Activated CD4-positive, alpha-beta T cell treated with anti-CD3 and anti-CD28 coated beads for 36 hours (primary cell): ENCODE measurements at regions of chr2 and their contacts with region 1.

Region 1: GRCh38 chr2:233053928-233054784 is 6.0 kb upstream of the INPP5D start:
- DNase-seq: peak; percentile 86
- ATAC-seq: peak; percentile 82
- H3K4me3 Mint-ChIP-seq: no peak overlapping the region
- H3K27ac Mint-ChIP-seq: no peak overlapping the region
- H3K4me1 Mint-ChIP-seq: peaks cover 4% of the 10 kb centered on the region
- H3K27me3 Mint-ChIP-seq: no peaks in the 10 kb centered on the region

Region 2: DNA sequence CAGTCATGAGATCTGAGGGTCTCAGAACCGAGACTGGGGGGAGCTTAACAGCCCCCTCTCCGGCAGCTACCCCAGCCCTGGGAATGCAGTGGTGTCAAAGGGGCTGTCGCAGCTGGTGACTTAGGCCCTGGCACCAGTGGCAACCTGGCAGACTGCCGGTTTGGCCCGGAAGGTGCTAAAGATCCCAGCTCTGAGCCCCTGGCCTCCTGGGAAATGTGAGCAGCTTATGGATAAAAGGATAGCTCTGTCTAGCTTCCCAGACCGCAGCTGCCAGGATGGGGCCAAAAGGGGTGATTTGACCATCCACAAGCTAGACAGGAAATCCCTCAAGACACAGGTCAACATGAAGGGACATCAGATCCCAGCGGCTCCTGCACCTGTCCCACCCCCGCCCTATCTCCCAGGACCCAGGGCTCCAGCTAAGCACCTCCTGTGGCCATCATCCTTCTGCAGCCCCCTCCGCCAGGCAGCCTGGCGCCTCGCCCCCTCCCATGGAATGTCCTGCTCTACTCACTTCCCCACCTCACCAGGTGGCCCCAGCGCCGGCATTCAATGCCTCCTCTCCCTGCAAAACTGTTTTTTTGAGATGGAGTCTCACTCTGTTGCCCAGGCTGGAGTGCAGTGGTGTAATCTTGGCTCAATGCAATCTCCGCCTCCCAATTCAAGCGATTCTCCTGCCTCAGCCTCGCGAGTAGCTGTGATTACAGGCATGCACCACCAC is 453.9 kb before region 1 on chr2:
- CTCF ChIA-PET with region 1: interaction called, 3 read pairs
- POLR2A ChIA-PET with region 1: no interaction called
- intact Hi-C with region 1: loop called in 1 of 2 experiments (anchors 10 kb)
- DNase-seq: no peak
- ATAC-seq: no peak
- H3K4me3 Mint-ChIP-seq: no peak overlapping the region
- H3K27ac Mint-ChIP-seq: no peak overlapping the region
- H3K4me1 Mint-ChIP-seq: no peaks in the 10 kb centered on the region
- H3K27me3 Mint-ChIP-seq: no peaks in the 10 kb centered on the region

Region 3: DNA sequence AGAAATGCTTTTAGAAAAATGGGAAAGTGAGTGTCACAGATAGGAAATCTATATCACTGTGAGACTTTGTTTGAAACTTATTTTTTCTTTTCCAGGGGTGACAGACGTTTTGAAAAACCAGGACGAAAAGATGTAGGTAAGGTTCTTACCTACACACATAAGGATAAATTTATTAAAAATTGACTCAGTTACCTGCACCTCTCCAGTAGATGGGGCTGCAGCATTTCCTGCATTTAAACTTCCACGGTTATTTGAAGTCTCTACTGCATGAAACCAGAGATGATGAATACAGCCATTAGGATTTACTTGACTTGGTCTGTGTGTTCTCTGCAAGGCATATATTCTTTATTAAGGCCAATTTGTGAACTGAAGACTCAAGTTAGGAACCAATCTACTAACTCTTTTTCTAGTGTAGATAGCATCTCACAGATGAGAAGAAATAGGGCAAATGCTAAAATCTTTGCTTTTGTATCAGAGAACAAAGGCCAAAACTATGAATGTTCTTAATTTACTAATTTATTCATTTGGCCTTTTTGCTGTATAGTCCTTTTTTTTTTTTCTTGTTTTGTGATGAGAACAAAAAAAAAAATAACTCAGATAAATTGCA is 292.8 kb before region 1 on chr2:
- CTCF ChIA-PET with region 1: interaction called, 4 read pairs
- POLR2A ChIA-PET with region 1: no interaction called
- intact Hi-C with region 1: loop called in 1 of 2 experiments (anchors 2 kb)
- DNase-seq: peak; percentile 58
- ATAC-seq: no peak
- H3K4me3 Mint-ChIP-seq: no peak overlapping the region
- H3K27ac Mint-ChIP-seq: no peak overlapping the region
- H3K4me1 Mint-ChIP-seq: peaks cover 17% of the 10 kb centered on the region
- H3K27me3 Mint-ChIP-seq: no peaks in the 10 kb centered on the region

Region 4: DNA sequence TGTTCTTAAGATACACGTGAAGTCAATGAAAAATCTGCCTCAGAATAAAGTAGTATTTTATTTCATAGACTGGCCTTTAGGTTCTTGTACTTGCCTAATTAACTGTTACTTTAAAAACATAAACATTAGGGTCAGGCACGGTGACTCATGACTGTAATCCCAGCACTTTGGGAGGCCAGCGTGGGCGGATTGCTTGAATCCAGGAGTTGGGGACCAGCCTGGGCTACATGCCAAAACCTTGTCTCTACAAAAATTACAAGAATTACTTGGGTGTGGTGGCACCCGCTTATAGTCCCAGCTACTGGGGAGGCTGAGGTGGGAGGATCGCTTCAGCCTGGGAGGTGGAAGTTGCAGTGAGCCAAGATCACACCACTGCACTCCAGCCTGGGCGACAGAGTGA is 200.1 kb before region 1 on chr2:
- CTCF ChIA-PET with region 1: interaction called, 8 read pairs
- POLR2A ChIA-PET with region 1: no interaction called
- intact Hi-C with region 1: loop called (anchors 1 kb)
- DNase-seq: no peak
- ATAC-seq: no peak
- H3K4me3 Mint-ChIP-seq: no peak overlapping the region
- H3K27ac Mint-ChIP-seq: no peak overlapping the region
- H3K4me1 Mint-ChIP-seq: peaks cover 3% of the 10 kb centered on the region
- H3K27me3 Mint-ChIP-seq: no peaks in the 10 kb centered on the region

Region 5: DNA sequence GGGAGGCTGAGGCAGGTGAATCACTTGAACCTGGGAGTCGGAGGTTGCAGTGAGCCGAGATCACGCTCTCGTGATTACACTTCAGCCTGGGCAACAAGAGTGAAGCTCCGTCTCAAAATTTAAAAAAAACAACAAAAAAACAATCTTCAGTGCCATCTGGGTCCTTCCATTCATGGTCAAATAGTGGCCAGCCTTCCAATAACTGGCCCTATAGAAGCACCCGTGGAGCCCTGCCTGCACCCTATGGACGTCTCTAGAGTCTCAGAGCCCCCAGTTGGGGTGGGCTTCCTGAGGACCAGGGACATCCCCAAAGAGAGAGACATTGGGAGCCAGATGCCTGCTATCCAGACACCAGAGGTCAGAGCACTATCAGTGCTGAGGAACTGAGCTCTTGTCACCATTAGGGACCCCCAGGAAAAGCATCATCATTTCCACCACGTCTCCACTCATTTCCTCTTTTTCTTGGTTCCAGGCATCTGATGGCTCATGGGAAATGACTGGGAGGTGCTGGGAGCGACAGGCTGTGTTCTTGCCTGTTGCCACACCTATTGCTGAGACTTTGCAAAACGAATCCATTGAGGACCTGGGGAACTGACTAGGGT is 12.3 kb before region 1 on chr2:
- CTCF ChIA-PET with region 1: interaction called, 25 read pairs
- POLR2A ChIA-PET with region 1: no interaction called
- intact Hi-C with region 1: no loop called
- DNase-seq: no peak
- ATAC-seq: no peak
- H3K4me3 Mint-ChIP-seq: no peak overlapping the region
- H3K27ac Mint-ChIP-seq: no peak overlapping the region
- H3K4me1 Mint-ChIP-seq: no peaks in the 10 kb centered on the region
- H3K27me3 Mint-ChIP-seq: no peaks in the 10 kb centered on the region

Region 6: DNA sequence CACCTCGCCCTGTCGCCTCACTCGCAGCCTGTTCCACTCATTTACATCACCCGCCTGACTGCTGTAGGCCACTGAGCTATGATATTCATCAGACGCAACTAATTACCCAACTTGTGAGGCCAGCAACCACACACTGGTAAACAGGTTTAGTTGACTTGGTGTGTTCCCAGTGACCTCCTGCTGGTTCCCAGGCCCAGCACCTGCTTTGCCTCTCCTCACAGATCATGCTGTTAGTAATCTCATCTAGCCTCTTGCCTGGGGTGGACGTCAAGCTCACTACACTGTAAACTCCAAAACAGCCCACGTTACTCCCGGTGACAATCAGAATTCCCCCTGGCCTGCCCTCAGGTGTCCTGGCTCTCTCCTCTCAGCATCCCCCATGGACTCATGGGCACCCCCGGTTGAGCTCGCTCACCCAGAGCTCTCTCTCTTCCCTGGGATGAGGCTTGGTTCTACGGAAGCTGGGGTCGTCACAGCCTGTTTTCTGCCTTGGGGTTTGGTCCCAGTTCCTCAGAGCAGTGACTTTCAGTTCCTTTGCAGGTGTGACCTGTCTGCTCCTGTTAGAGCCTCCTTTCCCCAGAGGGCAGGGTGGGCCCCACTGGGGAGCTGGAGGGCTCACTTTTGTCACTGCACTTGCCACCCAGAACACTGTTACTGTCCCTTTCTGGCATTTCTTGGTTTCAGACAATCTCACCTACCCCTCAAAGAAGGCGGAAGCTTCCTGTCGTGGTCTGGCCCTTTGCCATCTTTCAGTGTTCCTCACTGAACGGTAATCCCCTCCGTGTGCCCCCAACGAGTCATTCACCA is 46.2 kb after region 1 on chr2:
- CTCF ChIA-PET with region 1: interaction called, 13 read pairs
- POLR2A ChIA-PET with region 1: no interaction called
- intact Hi-C with region 1: no loop called
- DNase-seq: peak; percentile 81
- ATAC-seq: peak; percentile 73
- H3K4me3 Mint-ChIP-seq: peak overlapping the region; percentile 24
- H3K27ac Mint-ChIP-seq: peak overlapping the region; percentile 84
- H3K4me1 Mint-ChIP-seq: peaks cover 61% of the 10 kb centered on the region
- H3K27me3 Mint-ChIP-seq: no peaks in the 10 kb centered on the region